Activated CD8-positive, alpha-beta T cell treated with anti-CD3 and anti-CD28 coated beads, Interleukin-2, amount 10 ng/mL, durations not matched to agents 7 days and 5 days (primary cell): ENCODE measurements at regions of chr1 and their contacts with region 1.

Region 1: GRCh38 chr1:205485338-205486228 is 18.9 kb upstream of the CDK18 start:
- DNase-seq: peak; percentile 77
- ATAC-seq: peak; percentile 73
- H3K4me3 Mint-ChIP-seq: no peak overlapping the region
- H3K27ac Mint-ChIP-seq: no peak overlapping the region
- H3K4me1 Mint-ChIP-seq: peaks cover 30% of the 10 kb centered on the region
- H3K27me3 Mint-ChIP-seq: peaks cover 37% of the 10 kb centered on the region

Region 2: DNA sequence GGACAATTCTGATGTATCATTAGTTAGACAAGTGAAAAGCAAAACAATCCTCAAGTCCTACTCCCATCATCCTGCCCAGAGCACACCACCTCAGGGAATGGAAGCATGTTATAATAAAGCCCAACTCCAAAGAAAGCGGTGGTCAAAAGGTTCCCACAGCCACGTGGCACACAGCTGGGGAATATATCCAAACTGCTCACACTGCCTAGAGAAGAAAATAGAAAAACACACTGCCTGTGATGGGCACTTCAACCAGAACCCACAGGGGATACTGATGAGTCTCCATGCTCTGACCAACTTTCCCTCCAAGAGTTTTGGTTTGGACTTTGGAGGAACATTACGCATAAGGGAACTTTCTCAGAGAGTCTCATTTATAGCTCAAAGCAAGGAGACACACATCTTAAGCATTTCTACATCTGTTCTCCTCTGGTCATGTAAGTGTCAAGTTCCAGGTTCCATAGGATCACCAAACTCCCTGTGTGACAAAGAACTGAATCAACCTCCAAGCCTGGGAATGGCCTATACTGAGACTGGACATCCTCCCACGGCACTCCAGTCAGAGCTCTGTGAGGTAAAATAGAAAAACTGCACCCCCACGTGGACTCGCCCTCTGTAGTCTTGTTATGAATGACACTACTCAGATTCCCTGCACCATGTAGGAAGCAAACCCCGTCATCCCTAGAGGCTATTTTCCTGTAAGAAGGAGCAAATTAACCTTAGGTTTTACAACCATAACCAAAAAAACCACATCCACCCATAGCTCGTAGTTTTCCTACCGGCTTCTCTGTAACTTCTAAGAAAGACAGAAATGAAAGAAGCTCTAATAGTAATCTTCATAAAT is 286.3 kb before region 1 on chr1:
- CTCF ChIA-PET with region 1: no interaction called
- POLR2A ChIA-PET with region 1: no interaction called
- DNase-seq: peak; percentile 43
- ATAC-seq: peak; percentile 83
- H3K4me3 Mint-ChIP-seq: peak overlapping the region; percentile 62
- H3K27ac Mint-ChIP-seq: peak overlapping the region; percentile 71
- H3K4me1 Mint-ChIP-seq: peaks cover 49% of the 10 kb centered on the region
- H3K27me3 Mint-ChIP-seq: no peaks in the 10 kb centered on the region

Region 3: DNA sequence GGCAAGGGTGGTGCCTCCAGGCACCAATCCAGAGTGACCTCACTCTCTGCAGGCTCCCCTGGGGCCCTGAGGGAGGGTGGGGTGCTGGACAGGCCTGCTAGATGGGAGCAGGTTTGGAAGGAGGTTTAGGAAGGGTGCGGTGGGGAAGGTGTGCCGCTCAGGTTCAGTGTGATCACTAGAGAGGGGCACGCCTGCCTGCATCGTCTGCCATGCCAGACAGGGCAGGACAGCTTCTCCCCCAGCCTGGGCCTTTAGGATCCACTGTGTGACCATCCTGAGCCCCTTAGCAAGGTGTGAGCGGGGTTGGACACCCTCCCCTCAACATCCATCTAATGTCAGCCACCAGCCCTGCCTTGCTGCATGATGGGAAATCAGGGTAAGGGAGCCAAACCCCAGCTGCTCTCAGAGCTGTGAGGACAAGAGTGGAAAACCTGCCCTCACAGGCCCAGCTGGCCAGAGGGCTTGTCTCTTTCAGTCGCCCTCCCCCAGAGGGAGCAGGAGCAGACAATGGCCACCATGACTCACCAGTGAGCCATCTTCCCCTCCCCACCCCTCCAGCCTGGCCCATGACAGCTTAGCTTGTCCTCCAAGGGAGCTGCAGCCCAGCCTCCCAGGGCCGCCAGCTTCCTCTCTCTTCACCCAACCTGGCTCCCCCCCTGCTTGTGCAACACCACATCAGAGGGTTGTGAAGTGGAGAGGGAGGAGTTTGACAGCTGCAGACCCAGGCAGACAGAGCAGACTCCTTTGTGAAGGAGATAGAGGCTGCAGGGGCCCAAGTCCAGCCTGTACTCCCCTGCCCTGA is 201.0 kb before region 1 on chr1:
- CTCF ChIA-PET with region 1: interaction called, 10 read pairs
- POLR2A ChIA-PET with region 1: no interaction called
- DNase-seq: peak; percentile 95
- ATAC-seq: peak; percentile 67
- H3K4me3 Mint-ChIP-seq: peak overlapping the region; percentile 74
- H3K27ac Mint-ChIP-seq: peak overlapping the region; percentile 66
- H3K4me1 Mint-ChIP-seq: peaks cover 80% of the 10 kb centered on the region
- H3K27me3 Mint-ChIP-seq: peaks cover 23% of the 10 kb centered on the region

Region 4: DNA sequence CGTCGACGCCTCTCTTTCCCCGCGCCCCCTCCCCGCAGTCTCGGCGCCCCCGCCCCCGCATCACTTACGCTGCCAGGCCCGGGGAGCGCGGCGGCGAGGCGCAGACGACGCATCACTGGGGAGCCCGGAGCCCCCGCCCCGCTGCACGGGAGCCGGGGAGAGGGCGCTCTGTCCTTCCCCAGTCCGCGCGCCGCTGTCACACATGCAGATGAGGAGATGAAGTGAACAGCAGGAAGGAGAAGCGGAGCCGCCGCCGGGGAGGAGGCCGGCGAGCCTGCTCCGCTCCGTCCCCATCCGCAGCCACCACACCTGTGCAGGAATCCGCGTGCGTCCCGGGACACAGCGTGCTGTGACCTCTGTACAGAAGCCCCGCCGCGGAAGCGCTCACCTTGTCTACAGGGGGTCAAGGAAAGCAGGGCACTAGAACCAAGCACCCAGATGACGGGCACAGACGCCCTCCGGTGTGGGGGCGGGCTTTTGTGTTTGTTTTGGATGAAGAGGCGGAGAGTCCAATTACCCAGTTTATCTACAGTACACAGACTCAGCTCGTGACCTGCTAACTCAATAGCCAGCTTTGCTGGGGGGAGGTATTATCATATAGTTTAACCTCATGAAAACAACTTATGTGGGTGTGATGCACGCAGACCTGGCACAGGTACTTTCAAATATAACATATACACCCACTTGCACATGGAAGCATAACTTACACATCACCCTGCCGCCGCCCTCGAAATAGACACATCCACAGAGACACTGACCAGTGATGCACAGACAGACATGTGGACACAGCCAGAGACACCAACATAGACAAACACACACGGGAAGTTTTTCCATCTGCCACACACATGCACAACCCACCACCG is 141.3 kb before region 1 on chr1:
- CTCF ChIA-PET with region 1: interaction called, 11 read pairs
- POLR2A ChIA-PET with region 1: no interaction called
- DNase-seq: peak; percentile 34
- ATAC-seq: peak; percentile 38
- H3K4me3 Mint-ChIP-seq: no peak overlapping the region
- H3K27ac Mint-ChIP-seq: no peak overlapping the region
- H3K4me1 Mint-ChIP-seq: peaks cover 6% of the 10 kb centered on the region
- H3K27me3 Mint-ChIP-seq: peaks cover 60% of the 10 kb centered on the region

Region 5: GRCh38 chr1:205396967-205397616 is 88.5 kb before region 1 on chr1:
- CTCF ChIA-PET with region 1: interaction called, 188 read pairs
- POLR2A ChIA-PET with region 1: no interaction called
- DNase-seq: peak; percentile 38
- ATAC-seq: no peak
- H3K4me3 Mint-ChIP-seq: no peak overlapping the region
- H3K27ac Mint-ChIP-seq: no peak overlapping the region
- H3K4me1 Mint-ChIP-seq: no peaks in the 10 kb centered on the region
- H3K27me3 Mint-ChIP-seq: peaks cover 23% of the 10 kb centered on the region

Region 6: DNA sequence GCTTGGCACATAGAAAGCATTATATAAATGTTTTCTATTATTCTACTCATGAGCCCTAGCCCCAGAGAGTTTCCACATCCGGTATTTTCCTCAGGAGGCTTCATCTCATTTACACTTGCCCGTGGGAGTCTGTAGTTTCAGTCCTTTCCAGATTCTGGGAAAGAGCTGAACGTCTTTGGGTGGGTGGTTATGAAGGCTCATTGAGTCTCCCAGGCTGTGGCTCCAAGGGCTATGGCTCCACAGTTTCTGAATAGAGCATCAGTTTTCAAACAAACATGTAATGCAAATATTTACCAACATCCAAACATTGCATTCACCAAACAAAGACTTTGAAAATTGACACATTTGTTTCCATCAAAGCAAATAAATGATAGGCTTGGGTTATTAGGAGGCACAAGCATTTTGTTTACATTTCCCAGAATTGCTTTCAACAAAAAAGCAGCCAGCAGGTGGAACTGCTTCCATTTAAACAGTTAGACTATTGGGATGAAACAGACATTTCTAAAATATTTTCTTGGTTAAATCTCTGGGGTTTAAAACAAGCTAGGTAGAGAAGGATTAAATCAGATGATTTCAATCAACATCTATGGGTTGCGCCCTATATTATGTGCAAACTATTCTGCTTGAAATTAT is 62.5 kb before region 1 on chr1:
- CTCF ChIA-PET with region 1: interaction called, 29 read pairs
- POLR2A ChIA-PET with region 1: no interaction called
- DNase-seq: no peak
- ATAC-seq: no peak
- H3K4me3 Mint-ChIP-seq: no peak overlapping the region
- H3K27ac Mint-ChIP-seq: no peak overlapping the region
- H3K4me1 Mint-ChIP-seq: no peaks in the 10 kb centered on the region
- H3K27me3 Mint-ChIP-seq: peaks cover 51% of the 10 kb centered on the region

Region 7: DNA sequence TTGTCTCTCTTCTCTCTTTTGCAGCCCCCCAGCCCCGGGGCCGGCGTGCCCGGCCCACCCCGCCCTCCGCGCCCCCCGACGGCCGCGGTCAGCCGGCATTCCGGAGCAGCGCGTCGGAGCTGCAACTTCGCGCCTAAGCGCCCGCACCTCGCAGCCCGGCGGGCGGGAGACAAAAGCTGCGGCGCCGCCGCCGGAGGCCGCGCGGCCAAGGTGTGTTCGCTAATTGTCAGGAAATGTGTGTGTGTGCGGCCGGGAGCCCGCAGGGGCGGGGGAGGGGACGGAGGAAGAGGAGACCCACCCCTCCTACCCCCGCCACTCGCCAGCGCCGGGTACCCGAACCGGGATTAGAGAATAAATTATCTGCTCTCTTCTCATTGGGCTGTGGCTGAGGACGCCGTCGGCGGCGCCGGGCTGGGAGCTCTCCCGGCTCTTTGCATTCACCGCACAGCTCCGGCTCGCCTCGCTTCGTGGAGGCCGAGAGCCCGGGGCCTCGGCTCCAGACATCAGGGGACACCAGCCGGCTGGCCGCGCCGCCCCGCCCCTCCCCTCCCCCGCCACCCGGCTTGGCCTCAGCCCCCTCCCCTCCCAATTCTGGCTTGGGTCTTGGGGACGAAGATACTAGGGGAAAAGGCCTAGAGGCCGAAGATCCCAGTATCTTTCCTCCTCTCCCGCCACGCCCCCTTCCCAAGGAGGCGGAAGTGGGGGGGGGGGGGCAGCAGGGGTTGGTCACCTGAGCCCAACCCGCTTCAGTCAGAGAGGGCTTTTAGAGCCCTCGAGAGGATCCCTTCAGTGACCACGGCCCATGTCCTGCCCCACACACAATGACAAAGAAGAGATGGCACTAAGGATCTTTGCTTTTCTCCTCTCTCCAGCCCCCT is 28.5 kb before region 1 on chr1:
- CTCF ChIA-PET with region 1: interaction called, 16 read pairs
- POLR2A ChIA-PET with region 1: no interaction called
- DNase-seq: no peak
- ATAC-seq: peak; percentile 40
- H3K4me3 Mint-ChIP-seq: no peak overlapping the region
- H3K27ac Mint-ChIP-seq: no peak overlapping the region
- H3K4me1 Mint-ChIP-seq: peaks cover 11% of the 10 kb centered on the region
- H3K27me3 Mint-ChIP-seq: peaks cover 70% of the 10 kb centered on the region